Activated CD4-positive, alpha-beta T cell treated with anti-CD3 and anti-CD28 coated beads for 36 hours (primary cell): ENCODE measurements at regions of chr11 and their contacts with region 1.

Region 1: DNA sequence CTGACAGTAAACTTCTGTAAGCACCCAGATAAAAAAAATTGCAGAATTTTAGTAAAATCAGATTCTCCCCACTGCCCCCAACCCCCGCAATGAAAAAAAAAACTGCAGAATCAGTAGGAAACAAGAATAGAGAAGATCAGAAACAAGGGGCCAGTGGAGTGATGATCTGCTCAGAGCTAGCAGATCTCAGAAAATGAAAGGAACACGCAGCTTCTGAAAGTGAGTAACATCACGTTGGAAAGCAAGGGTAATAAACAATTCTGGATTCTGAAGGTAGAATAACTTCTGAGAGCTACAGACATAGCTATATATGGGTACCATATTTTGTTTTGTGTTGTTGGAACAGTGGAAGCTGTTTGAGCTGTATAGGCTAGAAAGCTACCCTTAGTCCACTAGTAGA is 23.2 kb downstream of the ACAT1 start:
- DNase-seq: no peak
- ATAC-seq: peak; percentile 70
- H3K4me3 Mint-ChIP-seq: no peak overlapping the region
- H3K27ac Mint-ChIP-seq: peak overlapping the region; percentile 52
- H3K4me1 Mint-ChIP-seq: peaks cover 12% of the 10 kb centered on the region
- H3K27me3 Mint-ChIP-seq: no peaks in the 10 kb centered on the region

Region 2: GRCh38 chr11:108193725-108194124 is 49.1 kb after region 1 on chr11:
- CTCF ChIA-PET with region 1: no interaction called
- POLR2A ChIA-PET with region 1: no interaction called
- intact Hi-C with region 1: loop called in 1 of 2 experiments (anchors 5 kb)
- DNase-seq: no peak
- ATAC-seq: no peak
- H3K4me3 Mint-ChIP-seq: no peak overlapping the region
- H3K27ac Mint-ChIP-seq: no peak overlapping the region
- H3K4me1 Mint-ChIP-seq: peaks cover 31% of the 10 kb centered on the region
- H3K27me3 Mint-ChIP-seq: no peaks in the 10 kb centered on the region

Region 3: GRCh38 chr11:108393046-108393445 is 248.4 kb after region 1 on chr11:
- CTCF ChIA-PET with region 1: no interaction called
- POLR2A ChIA-PET with region 1: no interaction called
- intact Hi-C with region 1: no loop called
- DNase-seq: no peak
- ATAC-seq: no peak
- H3K4me3 Mint-ChIP-seq: no peak overlapping the region
- H3K27ac Mint-ChIP-seq: no peak overlapping the region
- H3K4me1 Mint-ChIP-seq: no peaks in the 10 kb centered on the region
- H3K27me3 Mint-ChIP-seq: no peaks in the 10 kb centered on the region

Region 4: GRCh38 chr11:108561535-108561991 is 416.9 kb after region 1 on chr11:
- CTCF ChIA-PET with region 1: no interaction called
- POLR2A ChIA-PET with region 1: no interaction called
- intact Hi-C with region 1: no loop called
- DNase-seq: no peak
- ATAC-seq: no peak
- H3K4me3 Mint-ChIP-seq: no peak overlapping the region
- H3K27ac Mint-ChIP-seq: no peak overlapping the region
- H3K4me1 Mint-ChIP-seq: peaks cover 21% of the 10 kb centered on the region
- H3K27me3 Mint-ChIP-seq: no peaks in the 10 kb centered on the region

Region 5: DNA sequence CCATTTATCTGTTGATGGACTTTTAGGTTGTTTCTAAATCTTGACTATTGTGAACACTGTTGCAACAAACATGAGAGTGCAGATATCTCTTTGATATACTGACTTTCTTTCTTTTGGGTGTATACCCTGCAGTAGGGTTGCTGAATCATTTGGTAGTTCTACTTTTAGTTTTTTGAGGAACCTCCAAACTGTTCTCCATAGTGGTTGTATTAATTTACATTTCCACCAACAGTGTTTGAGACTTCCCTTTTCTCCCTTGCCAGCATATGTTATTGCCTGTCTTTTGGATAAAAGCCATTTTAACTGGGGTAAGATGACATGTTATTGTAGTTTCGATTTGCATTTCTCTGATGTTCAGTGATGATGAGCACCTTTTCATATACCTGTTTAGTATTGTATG is 850.3 kb after region 1 on chr11:
- CTCF ChIA-PET with region 1: no interaction called
- POLR2A ChIA-PET with region 1: no interaction called
- intact Hi-C with region 1: no loop called
- DNase-seq: no peak
- ATAC-seq: no peak
- H3K4me3 Mint-ChIP-seq: no peak overlapping the region
- H3K27ac Mint-ChIP-seq: no peak overlapping the region
- H3K4me1 Mint-ChIP-seq: peaks cover 2% of the 10 kb centered on the region
- H3K27me3 Mint-ChIP-seq: peaks cover 5% of the 10 kb centered on the region